Activated CD4-positive, alpha-beta T cell treated with anti-CD3 and anti-CD28 coated beads for 36 hours (primary cell): ENCODE measurements at regions of chr19 and their contacts with region 1.

Region 1: GRCh38 chr19:48899781-48900476 is at the start of gene NUCB1:
- DNase-seq: peak; percentile 100
- ATAC-seq: peak; percentile 95
- H3K4me3 Mint-ChIP-seq: peak within 1 kb of the TSS; percentile 99
- H3K27ac Mint-ChIP-seq: peak within 1 kb of the TSS; percentile 98
- H3K4me1 Mint-ChIP-seq: peaks cover 34% of the 10 kb centered on the region
- H3K27me3 Mint-ChIP-seq: peaks cover 5% of the 10 kb centered on the region
- total RNA-seq, gene NUCB1: 115 to 118 TPM

Region 2: DNA sequence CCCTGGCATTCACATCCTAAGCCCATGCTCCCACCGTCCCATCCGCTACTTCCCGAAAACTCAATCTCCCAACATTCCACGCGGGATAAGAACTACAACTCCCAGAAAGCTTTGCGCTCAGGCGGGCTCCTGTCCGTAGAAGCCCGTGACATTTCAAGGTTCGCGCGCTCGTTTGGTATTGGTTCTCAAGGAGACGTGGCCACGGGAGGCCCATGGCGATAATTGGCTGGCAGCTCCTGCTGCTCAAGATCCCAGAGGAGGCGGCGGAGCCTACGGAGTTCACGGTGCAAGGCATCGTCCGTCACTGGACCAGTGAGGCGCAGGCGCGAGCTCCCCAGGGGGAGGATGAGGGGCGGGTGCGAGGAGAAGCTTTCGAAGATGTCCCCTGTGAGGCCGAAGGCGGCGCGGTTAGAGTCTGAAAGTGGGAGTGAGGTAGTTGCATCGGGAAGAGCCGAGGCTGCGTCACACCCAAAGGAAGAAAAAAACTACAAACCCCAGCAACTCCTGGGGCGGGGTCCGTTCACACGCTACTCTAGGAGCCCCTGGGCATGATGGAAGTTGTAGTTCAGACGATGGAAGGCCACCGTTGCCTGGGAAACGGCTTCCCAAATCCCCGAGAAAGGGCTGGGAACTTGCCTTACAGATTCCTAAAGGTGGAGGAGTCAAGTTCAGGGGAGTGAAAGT is 179.2 kb before region 1 on chr19:
- CTCF ChIA-PET with region 1: no interaction called
- POLR2A ChIA-PET with region 1: no interaction called
- intact Hi-C with region 1: loop called in 1 of 2 experiments (anchors 1 kb)
- DNase-seq: peak; percentile 97
- ATAC-seq: peak; percentile 96
- H3K4me3 Mint-ChIP-seq: peak overlapping the region; percentile 80
- H3K27ac Mint-ChIP-seq: peak overlapping the region; percentile 97
- H3K4me1 Mint-ChIP-seq: peaks cover 14% of the 10 kb centered on the region
- H3K27me3 Mint-ChIP-seq: no peaks in the 10 kb centered on the region

Region 3: GRCh38 chr19:48760504-48761205 is 139.3 kb before region 1 on chr19:
- CTCF ChIA-PET with region 1: no interaction called
- POLR2A ChIA-PET with region 1: no interaction called
- intact Hi-C with region 1: no loop called
- DNase-seq: peak; percentile 26
- ATAC-seq: peak; percentile 51
- H3K4me3 Mint-ChIP-seq: no peak overlapping the region
- H3K27ac Mint-ChIP-seq: no peak overlapping the region
- H3K4me1 Mint-ChIP-seq: peaks cover 5% of the 10 kb centered on the region
- H3K27me3 Mint-ChIP-seq: peaks cover 6% of the 10 kb centered on the region

Region 4: DNA sequence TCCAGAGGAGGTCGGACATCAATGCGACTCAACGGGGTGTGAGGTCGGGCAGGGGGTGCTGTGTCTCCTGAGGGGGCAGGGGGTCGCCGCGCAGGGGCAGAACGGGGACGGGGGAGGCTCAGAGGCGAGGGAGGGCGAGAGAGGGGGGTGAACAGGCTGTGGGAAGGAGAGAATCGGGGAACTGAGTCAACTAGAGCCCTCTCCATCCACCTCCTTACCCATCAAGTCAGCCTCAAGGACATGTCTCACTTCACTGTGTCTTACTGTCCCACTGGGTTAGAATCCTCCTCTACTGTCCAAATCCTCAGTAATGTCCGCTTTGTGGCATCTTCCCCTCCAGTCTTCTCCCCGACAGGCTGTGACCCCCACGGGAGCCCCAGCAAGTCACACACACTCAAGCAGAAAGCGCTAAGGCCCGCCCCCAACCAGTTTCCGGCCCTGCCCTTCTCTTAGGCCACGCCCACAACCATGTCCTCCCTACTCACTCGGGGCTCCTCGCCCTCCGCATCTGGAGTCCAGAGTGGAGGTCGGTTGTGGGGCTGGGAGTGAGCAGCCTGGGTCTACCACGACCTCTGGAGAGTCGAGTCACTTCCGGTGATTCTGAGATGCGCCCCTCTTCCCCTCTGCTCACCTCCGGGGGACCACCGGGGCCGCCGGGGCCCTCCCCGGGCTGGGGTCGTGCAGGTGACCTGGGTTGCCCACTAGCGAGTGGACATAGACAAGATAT is 40.8 kb before region 1 on chr19:
- CTCF ChIA-PET with region 1: no interaction called
- POLR2A ChIA-PET with region 1: no interaction called
- intact Hi-C with region 1: loop called (anchors 1 kb)
- DNase-seq: peak; percentile 92
- ATAC-seq: peak; percentile 92
- H3K4me3 Mint-ChIP-seq: peak overlapping the region; percentile 94
- H3K27ac Mint-ChIP-seq: peak overlapping the region; percentile 93
- H3K4me1 Mint-ChIP-seq: peaks cover 7% of the 10 kb centered on the region
- H3K27me3 Mint-ChIP-seq: no peaks in the 10 kb centered on the region

Region 5: GRCh38 chr19:48933382-48933932 is 33.5 kb after region 1 on chr19 and contains the start of gene DHDH:
- CTCF ChIA-PET with region 1: no interaction called
- POLR2A ChIA-PET with region 1: interaction called, 7 read pairs
- intact Hi-C with region 1: loop called in 1 of 2 experiments (anchors 1 kb)
- DNase-seq: peak; percentile 90
- ATAC-seq: peak; percentile 92
- H3K4me3 Mint-ChIP-seq: peak within 1 kb of the TSS; percentile 74
- H3K27ac Mint-ChIP-seq: peak within 1 kb of the TSS; percentile 48
- H3K4me1 Mint-ChIP-seq: peaks cover 10% of the 10 kb centered on the region
- H3K27me3 Mint-ChIP-seq: peaks cover 2% of the 10 kb centered on the region
- total RNA-seq, gene DHDH: 1.4 to 2.4 TPM

Region 6: GRCh38 chr19:48954595-48955310 is 54.8 kb after region 1 on chr19 and contains the start of gene BAX:
- CTCF ChIA-PET with region 1: no interaction called
- POLR2A ChIA-PET with region 1: interaction called, 3 read pairs
- intact Hi-C with region 1: loop called in 1 of 2 experiments (anchors 1 kb)
- DNase-seq: peak; percentile 98
- ATAC-seq: peak; percentile 89
- H3K4me3 Mint-ChIP-seq: peak within 1 kb of the TSS; percentile 74
- H3K27ac Mint-ChIP-seq: peak within 1 kb of the TSS; percentile 87
- H3K4me1 Mint-ChIP-seq: peaks cover 26% of the 10 kb centered on the region
- H3K27me3 Mint-ChIP-seq: no peaks in the 10 kb centered on the region
- total RNA-seq, gene BAX: 128 to 143 TPM

Region 7: GRCh38 chr19:48970923-48971395 is 71.0 kb after region 1 on chr19:
- CTCF ChIA-PET with region 1: interaction called, 12 read pairs
- POLR2A ChIA-PET with region 1: interaction called, 5 read pairs
- intact Hi-C with region 1: no loop called
- DNase-seq: peak; percentile 91
- ATAC-seq: peak; percentile 84
- H3K4me3 Mint-ChIP-seq: no peak overlapping the region
- H3K27ac Mint-ChIP-seq: no peak overlapping the region
- H3K4me1 Mint-ChIP-seq: peaks cover 17% of the 10 kb centered on the region
- H3K27me3 Mint-ChIP-seq: no peaks in the 10 kb centered on the region